ENCODE measurements at regions of chr16 and their contacts with region 1.

Region 1: DNA sequence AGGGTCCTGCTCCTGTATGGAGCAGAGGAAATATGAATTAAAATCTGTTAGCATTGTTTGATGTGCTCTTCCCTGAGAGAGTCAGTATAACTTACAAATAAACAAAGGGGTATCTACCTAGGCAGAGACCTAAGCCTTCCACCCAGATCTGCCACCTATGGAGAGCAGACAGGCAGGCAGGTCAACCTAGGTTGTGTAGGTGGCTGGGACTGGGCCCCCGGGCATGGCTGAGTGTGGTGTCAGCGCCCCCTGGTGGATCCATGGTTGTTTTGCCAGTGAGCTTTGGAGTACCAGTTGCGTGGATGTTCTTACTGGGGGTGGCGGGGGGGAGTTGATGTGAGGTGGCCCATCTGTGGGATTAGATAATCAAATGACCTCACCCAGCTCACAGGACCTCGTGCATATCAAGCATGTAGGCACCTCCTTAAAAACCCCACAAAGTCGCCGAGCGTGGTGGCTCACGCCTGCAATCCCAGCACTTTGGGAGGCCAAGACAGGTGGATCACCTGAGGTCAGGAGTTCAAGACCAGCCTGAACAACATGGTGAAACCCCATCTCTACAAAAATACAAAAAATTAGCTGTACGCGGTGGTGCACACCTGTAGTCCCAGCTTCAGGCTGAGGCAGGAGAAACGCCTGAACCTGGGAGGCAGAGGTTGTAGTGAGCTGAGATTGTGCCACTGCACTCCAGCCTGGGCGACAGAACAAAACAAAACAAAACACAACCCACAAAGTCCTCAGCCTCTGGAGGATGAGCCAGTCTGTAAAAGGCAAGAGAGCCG is 17.6 kb downstream of the DUS2 start:
- DNase-seq: peak; percentile 76 to 96
- H3K4me3 ChIP-seq: no peak overlapping the region
- H3K27ac ChIP-seq: no peak overlapping the region
- H3K4me1 ChIP-seq: no peaks in the 10 kb centered on the region
- H3K27me3 ChIP-seq: no peaks in the 10 kb centered on the region
- CTCF ChIP-seq: peak; percentile 89 to 97 (median 96)
- EP300 ChIP-seq: no peak
- POLR2A ChIP-seq: no peak
- RAD21 ChIP-seq: peak; percentile 97

Region 2: DNA sequence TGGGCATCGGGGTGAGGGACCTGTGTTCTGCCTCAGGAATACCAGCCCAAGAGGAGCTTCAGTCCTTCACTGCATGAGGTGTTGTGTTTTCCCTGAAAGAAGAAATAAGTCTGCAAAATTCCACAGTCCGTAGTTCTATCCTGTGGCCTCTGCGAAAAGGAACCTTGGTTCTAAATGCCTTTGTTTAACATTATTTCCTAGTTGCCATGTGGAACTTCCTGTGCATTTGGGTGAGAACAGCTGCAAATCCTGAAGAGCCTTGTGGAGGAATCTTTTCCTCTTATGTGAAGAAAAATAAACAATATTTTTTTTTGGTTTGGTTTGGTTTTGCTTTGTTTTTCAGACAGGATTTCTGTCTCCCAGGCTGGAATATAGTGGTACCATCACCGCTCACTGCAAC is 137.9 kb before region 1 on chr16:
- CTCF ChIA-PET with region 1: no interaction called
- POLR2A ChIA-PET with region 1: no interaction called
- DNase-seq: no peak
- H3K4me3 ChIP-seq: no peak overlapping the region
- H3K27ac ChIP-seq: no peak overlapping the region
- H3K4me1 ChIP-seq: no peaks in the 10 kb centered on the region
- H3K27me3 ChIP-seq: no peaks in the 10 kb centered on the region
- CTCF ChIP-seq: no peak
- EP300 ChIP-seq: no peak
- POLR2A ChIP-seq: no peak
- RAD21 ChIP-seq: no peak

Region 3: DNA sequence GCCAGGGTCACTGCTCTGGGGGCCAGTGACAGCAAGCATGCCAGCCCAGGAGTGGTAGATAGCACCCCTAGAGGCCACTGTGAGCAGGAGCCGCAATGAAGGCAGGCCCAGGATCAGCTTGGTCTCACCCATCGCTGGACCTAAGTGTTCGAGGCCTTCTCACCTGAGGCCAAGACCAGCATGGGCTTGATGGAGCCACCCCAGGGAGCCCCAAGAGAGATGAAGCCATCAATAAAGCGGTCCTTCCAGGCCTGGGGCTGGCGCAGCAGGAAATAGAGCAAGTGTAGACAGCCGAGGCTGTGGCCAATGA is 98.5 kb before region 1 on chr16:
- CTCF ChIA-PET with region 1: interaction called, 10 read pairs
- POLR2A ChIA-PET with region 1: no interaction called
- DNase-seq: peak; percentile 49 to 77
- H3K4me3 ChIP-seq: no peak overlapping the region
- H3K27ac ChIP-seq: no peak overlapping the region
- H3K4me1 ChIP-seq: peaks cover 0 to 2% (median 0%) of the 10 kb centered on the region in 4 experiments; a peak in 3 of 7 replicates
- H3K27me3 ChIP-seq: no peaks in the 10 kb centered on the region
- CTCF ChIP-seq: peak; percentile 84 to 99 (median 96)
- EP300 ChIP-seq: no peak
- POLR2A ChIP-seq: no peak
- RAD21 ChIP-seq: peak; percentile 71 to 80

Region 4: GRCh38 chr16:67968400-67969253 is 72.1 kb before region 1 on chr16 and contains the start of gene SLC12A4:
- CTCF ChIA-PET with region 1: interaction called, 41 read pairs
- POLR2A ChIA-PET with region 1: interaction called, 4 read pairs
- DNase-seq: peak in 1 of 2 experiments; percentile 88
- H3K4me3 ChIP-seq: peak within 1 kb of the TSS; percentile 48 to 67 (median 64)
- H3K27ac ChIP-seq: no peak within 1 kb of the TSS
- H3K4me1 ChIP-seq: peaks cover 6 to 25% (median 19%) of the 10 kb centered on the region in 4 experiments
- H3K27me3 ChIP-seq: no peaks in the 10 kb centered on the region
- CTCF ChIP-seq: no peak
- EP300 ChIP-seq: no peak
- POLR2A ChIP-seq: no peak
- RAD21 ChIP-seq: no peak
- total RNA-seq, gene SLC12A4: 41.3 and 46.6 TPM in 2 replicates

Region 5: DNA sequence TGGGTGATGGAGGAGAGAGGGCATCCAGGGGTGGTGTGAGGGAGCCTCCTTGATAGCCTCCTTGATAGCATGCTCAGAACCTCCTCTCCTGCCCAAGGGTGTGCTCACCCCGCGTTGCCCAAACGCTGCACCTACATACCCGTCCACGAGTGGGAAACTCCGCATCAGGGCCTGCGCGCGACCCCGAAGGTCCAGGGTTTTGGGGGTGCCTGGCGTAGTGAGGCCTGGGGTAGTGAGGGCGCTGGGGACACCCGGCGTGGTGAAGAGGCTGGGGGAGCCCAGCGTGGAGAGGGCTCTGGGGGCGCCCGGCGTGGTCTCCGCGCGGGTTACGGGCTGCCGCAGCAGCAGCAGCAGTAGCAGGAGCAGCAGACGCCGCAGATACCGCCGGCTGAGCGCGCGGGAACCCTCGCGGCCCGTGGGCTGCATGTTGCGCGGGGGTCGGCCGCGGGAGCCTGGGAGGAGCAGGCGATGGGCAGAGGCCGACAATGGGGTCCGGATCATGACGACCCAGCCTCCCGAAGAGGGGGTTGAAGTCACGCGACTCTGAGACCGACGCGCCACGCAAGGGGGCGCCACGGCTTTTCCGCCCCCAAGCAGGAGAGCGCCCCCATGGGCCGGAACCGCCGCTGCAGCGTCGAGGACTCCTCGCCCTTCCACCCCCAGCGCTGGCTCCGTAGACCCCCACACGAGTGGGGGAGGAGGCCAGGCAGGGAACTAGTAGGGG is 60.6 kb before region 1 on chr16 and contains the start of gene DPEP3:
- CTCF ChIA-PET with region 1: interaction called, 10 read pairs
- POLR2A ChIA-PET with region 1: no interaction called
- DNase-seq: peak in 1 of 2 experiments; percentile 89
- H3K4me3 ChIP-seq: peak within 1 kb of the TSS in 2 of 4 experiments; percentile 3 to 46; a peak in 2 of 8 replicates
- H3K27ac ChIP-seq: no peak within 1 kb of the TSS
- H3K4me1 ChIP-seq: peaks cover 0 to 4% (median 0%) of the 10 kb centered on the region in 4 experiments; a peak in 3 of 7 replicates
- H3K27me3 ChIP-seq: peaks cover 0 to 2% (median 0%) of the 10 kb centered on the region in 4 experiments; a peak in 2 of 7 replicates
- CTCF ChIP-seq: peak; percentile 87 to 100 (median 93)
- EP300 ChIP-seq: peak in 1 of 2 experiments; percentile 34; a peak in 1 of 3 replicates
- POLR2A ChIP-seq: no peak
- RAD21 ChIP-seq: peak; percentile 38 to 49; a peak in 3 of 4 replicates
- total RNA-seq, gene DPEP3: 9.9 and 10.6 TPM in 2 replicates

Region 6: DNA sequence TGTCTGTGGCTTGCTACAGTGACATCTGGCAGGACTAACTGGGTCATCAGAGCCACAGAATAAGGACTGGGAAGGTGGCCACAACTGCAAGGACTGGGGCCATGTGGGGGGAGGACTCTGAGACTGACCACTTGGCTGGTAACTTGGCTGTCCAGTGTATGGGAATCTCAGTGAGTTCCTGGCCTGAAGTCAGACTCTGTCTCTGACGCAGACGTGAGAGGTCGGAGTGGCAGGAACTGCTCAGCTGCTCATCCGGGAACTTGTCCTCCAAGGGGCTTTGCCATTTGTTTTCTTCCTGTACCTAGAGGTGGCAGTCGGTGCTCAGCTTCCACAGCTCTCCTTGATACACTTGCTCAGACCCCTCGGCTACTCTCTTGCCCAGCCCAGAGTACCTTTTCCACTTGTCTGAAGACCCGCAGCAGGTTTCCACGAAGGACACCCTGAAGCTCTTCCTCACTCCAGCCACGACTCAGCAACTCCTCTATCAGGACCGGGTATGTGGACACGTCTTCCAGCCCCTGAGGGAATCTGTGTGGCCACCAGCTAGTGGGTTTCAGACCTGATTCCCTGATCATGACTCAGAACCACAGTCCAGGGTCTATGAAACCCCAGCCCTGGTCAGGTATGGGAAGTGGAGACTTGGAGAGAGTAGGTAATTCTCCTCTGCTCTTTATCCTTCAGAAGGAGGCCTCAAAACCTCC is 53.1 kb before region 1 on chr16:
- CTCF ChIA-PET with region 1: interaction called, 23 read pairs
- POLR2A ChIA-PET with region 1: no interaction called
- DNase-seq: no peak
- H3K4me3 ChIP-seq: no peak overlapping the region
- H3K27ac ChIP-seq: no peak overlapping the region
- H3K4me1 ChIP-seq: no peaks in the 10 kb centered on the region
- H3K27me3 ChIP-seq: peaks cover 0 to 7% (median 5%) of the 10 kb centered on the region in 4 experiments; a peak in 5 of 7 replicates
- CTCF ChIP-seq: no peak
- EP300 ChIP-seq: no peak
- POLR2A ChIP-seq: no peak
- RAD21 ChIP-seq: no peak

Region 7: DNA sequence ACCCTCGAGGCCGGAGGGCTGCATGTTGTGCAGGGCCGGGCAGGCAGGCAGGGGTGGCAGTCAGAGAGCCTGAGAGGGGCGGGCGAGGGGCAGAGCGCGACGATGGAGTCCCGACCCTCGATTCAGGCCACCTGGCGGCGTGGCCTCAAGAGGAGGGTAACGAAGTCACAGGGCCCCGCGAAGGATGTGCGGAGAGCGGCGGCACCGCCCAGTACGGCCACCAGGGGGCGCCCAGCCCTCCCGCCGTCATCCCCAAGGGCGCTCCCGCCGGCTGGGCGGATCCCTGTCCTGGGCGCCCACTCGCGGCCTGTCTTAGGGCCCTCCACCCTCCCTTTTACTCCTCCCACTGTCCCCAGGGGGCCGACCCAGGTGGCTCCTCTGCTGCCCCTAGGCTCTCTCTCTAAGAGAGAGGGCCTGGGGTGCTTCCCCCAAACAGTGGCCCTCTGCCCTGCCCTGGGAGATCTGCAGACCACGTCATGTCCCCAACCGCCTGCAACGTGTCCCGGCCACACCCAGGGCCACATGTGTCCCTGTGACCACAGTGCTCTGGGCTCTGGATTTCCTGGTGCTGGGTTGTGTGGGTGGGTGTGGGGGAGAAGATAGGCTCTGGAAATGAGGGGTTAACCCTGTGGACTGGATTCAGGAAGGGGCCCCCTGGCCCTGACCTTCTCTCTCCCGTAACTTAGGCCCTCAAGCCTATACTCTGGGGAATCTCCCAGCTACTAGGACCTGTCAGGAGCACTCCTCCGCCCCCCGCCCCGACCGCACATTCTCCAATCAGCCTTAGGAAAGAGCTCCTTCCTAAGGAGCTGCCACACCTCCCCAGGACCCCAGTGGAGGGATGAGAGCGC is 47.3 kb before region 1 on chr16:
- CTCF ChIA-PET with region 1: interaction called, 23 read pairs
- POLR2A ChIA-PET with region 1: interaction called, 3 read pairs
- DNase-seq: peak in 1 of 2 experiments; percentile 93
- H3K4me3 ChIP-seq: no peak overlapping the region
- H3K27ac ChIP-seq: no peak overlapping the region
- H3K4me1 ChIP-seq: no peaks in the 10 kb centered on the region; a peak in 3 of 7 replicates
- H3K27me3 ChIP-seq: peaks cover 0 to 12% (median 8%) of the 10 kb centered on the region in 4 experiments; a peak in 5 of 7 replicates
- CTCF ChIP-seq: peak; percentile 90 to 97 (median 94)
- EP300 ChIP-seq: no peak
- POLR2A ChIP-seq: no peak
- RAD21 ChIP-seq: peak; percentile 53 to 65

Region 8: GRCh38 chr16:68022704-68023522 is 17.8 kb before region 1 on chr16 and contains the starts of genes DDX28 and DUS2:
- CTCF ChIA-PET with region 1: interaction called, 18 read pairs
- POLR2A ChIA-PET with region 1: interaction called, 28 read pairs
- DNase-seq: peak; percentile 70 to 99
- H3K4me3 ChIP-seq: peak within 1 kb of the TSS; percentile 89 to 99 (median 96)
- H3K27ac ChIP-seq: peak within 1 kb of the TSS; percentile 97
- H3K4me1 ChIP-seq: peaks cover 0 to 8% (median 5%) of the 10 kb centered on the region in 4 experiments; a peak in 5 of 7 replicates
- H3K27me3 ChIP-seq: no peaks in the 10 kb centered on the region
- CTCF ChIP-seq: no peak
- EP300 ChIP-seq: peak in 1 of 2 experiments; percentile 17; a peak in 1 of 3 replicates
- POLR2A ChIP-seq: peak; percentile 93 to 98
- RAD21 ChIP-seq: no peak; a peak in 1 of 4 replicates
- total RNA-seq, gene DDX28: 16.8 and 17.2 TPM in 2 replicates
- total RNA-seq, gene DUS2: 24.5 and 27.0 TPM in 2 replicates

Region 9: DNA sequence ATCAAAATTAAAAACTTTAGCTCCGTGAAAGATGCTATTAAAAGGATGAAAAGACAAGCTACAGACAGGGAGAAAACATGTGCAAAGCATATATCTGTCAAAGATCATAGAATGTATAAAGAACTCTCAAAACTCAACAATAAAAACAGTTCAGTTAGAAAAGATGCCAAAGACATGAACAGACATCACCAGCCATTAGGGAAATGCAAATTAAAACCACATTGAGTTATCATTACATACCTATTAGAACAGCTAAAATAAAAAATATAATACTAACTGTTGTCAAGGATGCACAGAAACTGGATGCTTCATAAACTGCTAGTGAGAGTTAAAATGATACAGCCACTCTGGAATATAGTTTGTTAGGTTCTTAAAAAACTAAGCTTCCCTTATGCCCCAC is 103.3 kb after region 1 on chr16:
- CTCF ChIA-PET with region 1: no interaction called
- POLR2A ChIA-PET with region 1: no interaction called
- DNase-seq: no peak
- H3K4me3 ChIP-seq: no peak overlapping the region
- H3K27ac ChIP-seq: no peak overlapping the region
- H3K4me1 ChIP-seq: no peaks in the 10 kb centered on the region
- H3K27me3 ChIP-seq: no peaks in the 10 kb centered on the region
- CTCF ChIP-seq: no peak
- EP300 ChIP-seq: no peak
- POLR2A ChIP-seq: no peak
- RAD21 ChIP-seq: no peak

Region 10: GRCh38 chr16:68197250-68197649 is 156.6 kb after region 1 on chr16:
- CTCF ChIA-PET with region 1: no interaction called
- POLR2A ChIA-PET with region 1: no interaction called
- DNase-seq: no peak
- H3K4me3 ChIP-seq: no peak overlapping the region
- H3K27ac ChIP-seq: no peak overlapping the region
- H3K4me1 ChIP-seq: no peaks in the 10 kb centered on the region
- H3K27me3 ChIP-seq: no peaks in the 10 kb centered on the region
- CTCF ChIP-seq: no peak
- EP300 ChIP-seq: no peak
- POLR2A ChIP-seq: no peak
- RAD21 ChIP-seq: no peak

Measured in H1 (cell line).